Heart left ventricle (tissue), 16 donors: ENCODE measurements at regions of chr13 and their contacts with region 1.

Region 1: GRCh38 chr13:24220086-24220703 is 59.7 kb downstream of the SPATA13 start:
- DNase-seq: peak in 3 of 5 donors; percentile 30 to 59 (median 50)
- ATAC-seq: peak; percentile 73 to 81 (median 76)
- H3K4me3 ChIP-seq: no peak overlapping the region
- H3K27ac ChIP-seq: peak overlapping the region in 2 of 12 donors; percentile 8 to 23
- H3K4me1 ChIP-seq: peaks cover 0 to 63% (median 34%) of the 10 kb centered on the region in 12 donors
- H3K27me3 ChIP-seq: no peaks in the 10 kb centered on the region
- CTCF ChIP-seq: peak; percentile 59 to 88 (median 76)
- POLR2A ChIP-seq: no peak

Region 2: GRCh38 chr13:23921451-23921888 is 298.7 kb before region 1 on chr13:
- intact Hi-C with region 1: loop called (anchors 1 to 5 kb)
- DNase-seq: no peak
- ATAC-seq: peak in 3 of 4 donors; percentile 58 to 63 (median 58)
- H3K4me3 ChIP-seq: no peak overlapping the region
- H3K27ac ChIP-seq: no peak overlapping the region
- H3K4me1 ChIP-seq: peaks cover 0 to 8% (median 0%) of the 10 kb centered on the region in 12 donors
- H3K27me3 ChIP-seq: peaks cover 0 to 9% (median 0%) of the 10 kb centered on the region in 9 donors
- CTCF ChIP-seq: peak; percentile 64 to 84 (median 74)
- POLR2A ChIP-seq: no peak

Region 3: GRCh38 chr13:24020375-24020830 is 199.8 kb before region 1 on chr13:
- intact Hi-C with region 1: loop called (anchors 1 to 5 kb)
- DNase-seq: no peak
- ATAC-seq: peak in 3 of 4 donors; percentile 42 to 65 (median 47)
- H3K4me3 ChIP-seq: no peak overlapping the region
- H3K27ac ChIP-seq: no peak overlapping the region
- H3K4me1 ChIP-seq: peaks cover 0 to 7% (median 0%) of the 10 kb centered on the region in 12 donors
- H3K27me3 ChIP-seq: no peaks in the 10 kb centered on the region
- CTCF ChIP-seq: peak; percentile 61 to 88 (median 74)
- POLR2A ChIP-seq: no peak

Region 4: GRCh38 chr13:24053519-24054251 is 166.5 kb before region 1 on chr13:
- intact Hi-C with region 1: loop called (anchors 1 to 5 kb)
- DNase-seq: peak in 2 of 5 donors; percentile 39 to 40
- ATAC-seq: peak; percentile 56 to 84 (median 76)
- H3K4me3 ChIP-seq: peak overlapping the region in 4 of 12 donors; percentile 3 to 32 (median 20)
- H3K27ac ChIP-seq: peak overlapping the region; percentile 11 to 78 (median 54)
- H3K4me1 ChIP-seq: peaks cover 0 to 35% (median 17%) of the 10 kb centered on the region in 12 donors
- H3K27me3 ChIP-seq: no peaks in the 10 kb centered on the region
- CTCF ChIP-seq: peak; percentile 55 to 74 (median 66)
- POLR2A ChIP-seq: no peak

Region 5: DNA sequence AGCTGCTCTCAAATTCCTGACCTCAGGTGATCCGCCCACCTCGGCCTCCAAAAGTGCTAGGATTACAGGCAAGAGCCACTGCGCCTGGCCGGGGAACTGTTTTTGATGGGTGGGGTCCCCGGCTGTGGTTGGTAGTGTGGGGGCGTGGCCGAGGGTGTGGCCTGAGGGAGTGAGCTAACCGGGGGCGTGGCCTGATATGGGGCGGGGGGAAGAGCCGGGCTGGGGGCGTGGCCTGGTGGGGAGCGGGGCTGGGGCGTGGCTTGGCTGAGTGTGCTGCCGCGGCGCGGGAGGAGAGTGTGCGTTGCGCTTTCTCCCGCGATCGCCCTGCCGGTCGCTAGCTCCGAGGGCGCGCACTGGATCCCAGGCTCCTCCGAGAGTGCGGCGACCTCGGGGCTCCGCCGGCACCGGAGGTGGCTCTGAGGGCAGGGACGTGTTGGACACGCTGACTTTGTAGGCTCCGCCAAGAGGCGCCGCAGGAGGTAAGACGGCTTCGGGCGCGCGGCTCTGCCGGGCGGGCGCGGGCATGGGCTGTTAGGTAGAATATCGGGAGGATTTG is 59.7 kb before region 1 on chr13 and contains the start of gene SPATA13:
- intact Hi-C with region 1: loop called in 6 of 10 experiments (anchors 5 to 10 kb)
- DNase-seq: peak; percentile 92 to 96 (median 93)
- ATAC-seq: peak; percentile 96 to 99 (median 98)
- H3K4me3 ChIP-seq: peak within 1 kb of the TSS; percentile 62 to 91 (median 82)
- H3K27ac ChIP-seq: peak within 1 kb of the TSS; percentile 50 to 85 (median 70)
- H3K4me1 ChIP-seq: peaks cover 0 to 27% (median 6%) of the 10 kb centered on the region in 12 donors
- H3K27me3 ChIP-seq: peaks cover 0 to 11% (median 0%) of the 10 kb centered on the region in 9 donors
- CTCF ChIP-seq: peak in 1 of 12 donors; percentile 6
- POLR2A ChIP-seq: peak in 1 of 2 donors; percentile 67
- total RNA-seq, gene SPATA13: 7.1 to 20.1 (median 9.3) TPM

Region 6: GRCh38 chr13:24168392-24168750 is 51.8 kb before region 1 on chr13:
- intact Hi-C with region 1: loop called in 6 of 10 experiments (anchors 5 to 10 kb)
- DNase-seq: no peak
- ATAC-seq: no peak
- H3K4me3 ChIP-seq: no peak overlapping the region
- H3K27ac ChIP-seq: peak overlapping the region in 1 of 12 donors; percentile 9
- H3K4me1 ChIP-seq: peaks cover 0 to 11% (median 0%) of the 10 kb centered on the region in 12 donors
- H3K27me3 ChIP-seq: no peaks in the 10 kb centered on the region
- CTCF ChIP-seq: no peak
- POLR2A ChIP-seq: no peak